H1 (cell line): ENCODE measurements at regions of chr1 and their contacts with region 1.

Region 1: GRCh38 chr1:34057347-34058130 is 107.5 kb downstream of the CSMD2 start:
- DNase-seq: peak in 1 of 2 experiments; percentile 59
- H3K4me3 ChIP-seq: no peak overlapping the region
- H3K27ac ChIP-seq: no peak overlapping the region
- H3K4me1 ChIP-seq: peaks cover 4 to 10% (median 6%) of the 10 kb centered on the region in 4 experiments; a peak in 6 of 7 replicates
- H3K27me3 ChIP-seq: no peaks in the 10 kb centered on the region
- CTCF ChIP-seq: no peak
- EP300 ChIP-seq: no peak
- POLR2A ChIP-seq: no peak
- RAD21 ChIP-seq: no peak

Region 2: DNA sequence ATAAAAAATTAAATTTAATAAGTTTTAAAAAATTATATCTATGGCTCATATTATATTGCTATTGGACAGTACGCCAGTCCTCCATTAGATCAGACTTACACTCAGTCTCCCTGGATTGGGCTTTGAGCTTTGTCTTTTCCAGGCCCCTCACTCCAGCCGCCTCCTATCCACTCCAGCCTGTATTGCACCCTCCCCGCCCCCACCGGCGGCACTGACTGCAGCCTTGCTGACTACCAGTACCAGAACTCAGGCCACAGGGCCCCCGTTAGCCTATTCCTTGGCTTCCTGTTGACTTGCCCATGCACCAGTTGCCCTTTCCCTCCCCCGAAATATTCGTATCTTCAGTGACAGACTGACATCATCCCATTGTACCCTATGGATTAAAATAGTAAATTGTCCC is 20.4 kb before region 1 on chr1:
- CTCF ChIA-PET with region 1: interaction called, 10 read pairs
- POLR2A ChIA-PET with region 1: interaction called, 3 read pairs
- DNase-seq: peak in 1 of 2 experiments; percentile 70
- H3K4me3 ChIP-seq: no peak overlapping the region
- H3K27ac ChIP-seq: no peak overlapping the region
- H3K4me1 ChIP-seq: peaks cover 4 to 14% (median 11%) of the 10 kb centered on the region in 4 experiments; a peak in 6 of 7 replicates
- H3K27me3 ChIP-seq: no peaks in the 10 kb centered on the region
- CTCF ChIP-seq: peak; percentile 38 to 56 (median 43); a peak in 3 of 4 replicates
- EP300 ChIP-seq: no peak
- POLR2A ChIP-seq: no peak
- RAD21 ChIP-seq: peak; percentile 19 to 43; a peak in 3 of 4 replicates

Region 3: DNA sequence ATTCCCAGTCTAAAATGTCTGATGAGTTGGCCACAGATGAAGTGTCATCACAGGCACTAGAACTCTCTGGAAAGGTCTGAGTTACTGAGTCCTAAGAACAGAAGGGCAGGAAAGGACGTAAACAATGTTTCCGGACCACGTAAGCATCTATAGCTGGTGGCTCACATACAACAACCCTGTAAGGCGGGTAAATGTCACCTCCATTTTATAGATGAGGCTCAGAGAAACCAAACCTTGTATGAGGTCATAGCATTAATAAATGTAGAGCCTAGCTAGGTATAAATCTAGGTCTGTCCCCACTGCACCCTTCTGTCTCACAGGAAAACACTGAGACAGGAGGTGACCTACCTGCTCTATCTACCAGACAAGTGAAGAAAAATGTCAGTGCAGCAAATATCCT is 20.8 kb after region 1 on chr1:
- CTCF ChIA-PET with region 1: no interaction called
- POLR2A ChIA-PET with region 1: no interaction called
- DNase-seq: no peak
- H3K4me3 ChIP-seq: no peak overlapping the region
- H3K27ac ChIP-seq: no peak overlapping the region
- H3K4me1 ChIP-seq: peaks cover 0 to 8% (median 0%) of the 10 kb centered on the region in 4 experiments; a peak in 1 of 7 replicates
- H3K27me3 ChIP-seq: no peaks in the 10 kb centered on the region
- CTCF ChIP-seq: no peak
- EP300 ChIP-seq: no peak
- POLR2A ChIP-seq: no peak
- RAD21 ChIP-seq: no peak

Region 4: DNA sequence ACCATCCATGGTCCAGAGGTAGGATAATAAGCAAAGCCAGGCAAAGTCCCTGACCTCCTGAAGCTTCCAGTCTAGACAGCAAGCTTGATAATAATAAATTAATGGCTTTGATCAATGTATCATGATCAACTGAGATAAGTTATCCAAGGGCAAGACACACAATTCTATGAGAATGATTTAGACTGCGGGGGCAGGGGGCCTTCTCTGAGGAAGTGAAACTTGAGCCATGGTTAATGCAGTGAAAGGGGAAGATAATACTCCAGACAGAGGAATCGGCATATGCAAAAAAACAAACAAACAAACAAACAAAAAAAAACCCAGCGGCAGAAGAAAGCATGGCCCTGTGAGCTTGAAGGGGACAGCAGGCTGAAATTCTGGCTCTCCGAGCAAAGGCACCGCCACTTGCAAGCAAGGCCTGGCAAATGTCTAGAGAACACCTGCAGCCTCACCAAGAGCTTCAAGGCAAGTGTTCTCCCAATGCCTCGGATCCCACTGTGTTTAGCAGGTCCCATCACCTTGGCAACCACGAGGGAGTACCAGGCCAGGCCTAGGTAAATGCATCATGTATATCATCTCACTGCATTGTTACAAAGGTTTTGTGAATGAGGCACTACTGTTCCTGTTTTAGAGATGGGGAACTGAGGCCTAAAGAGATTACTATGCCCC is 82.6 kb after region 1 on chr1:
- CTCF ChIA-PET with region 1: no interaction called
- POLR2A ChIA-PET with region 1: no interaction called
- DNase-seq: no peak
- H3K4me3 ChIP-seq: no peak overlapping the region
- H3K27ac ChIP-seq: no peak overlapping the region
- H3K4me1 ChIP-seq: peaks cover 0 to 9% (median 3%) of the 10 kb centered on the region in 4 experiments; a peak in 3 of 7 replicates
- H3K27me3 ChIP-seq: no peaks in the 10 kb centered on the region
- CTCF ChIP-seq: no peak
- EP300 ChIP-seq: no peak
- POLR2A ChIP-seq: no peak
- RAD21 ChIP-seq: no peak